ENCODE measurements at regions of chr1 and their contacts with region 1.

Region 1: DNA sequence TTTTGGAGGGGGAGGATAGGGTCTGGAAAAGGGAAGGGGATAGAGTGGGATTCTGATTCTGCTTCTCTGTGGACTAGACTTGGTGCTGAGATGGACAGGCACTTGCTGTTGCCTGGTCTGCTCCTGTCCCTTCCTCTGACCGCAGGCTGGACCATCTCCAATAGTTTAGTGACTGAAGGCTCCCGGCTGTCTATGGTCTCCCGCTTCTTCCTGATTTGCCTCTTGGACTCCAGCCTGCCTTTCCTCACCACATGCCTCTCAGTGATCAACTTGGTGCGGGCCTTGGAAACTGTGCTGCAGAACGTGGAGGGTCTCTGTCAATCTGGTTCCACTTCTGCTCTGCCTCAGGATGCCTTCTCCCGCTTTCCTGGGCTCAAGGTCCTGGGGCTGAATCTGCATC is 6.3 kb upstream of the ZSCAN20 start:
- DNase-seq: no peak
- ATAC-seq: peak in 3 of 4 donors; percentile 52 to 76 (median 63)
- H3K4me3 ChIP-seq: no peak overlapping the region
- H3K27ac ChIP-seq: no peak overlapping the region
- H3K4me1 ChIP-seq: peaks cover 21% of the 10 kb centered on the region
- H3K27me3 ChIP-seq: no peaks in the 10 kb centered on the region
- CTCF ChIP-seq: no peak

Region 2: DNA sequence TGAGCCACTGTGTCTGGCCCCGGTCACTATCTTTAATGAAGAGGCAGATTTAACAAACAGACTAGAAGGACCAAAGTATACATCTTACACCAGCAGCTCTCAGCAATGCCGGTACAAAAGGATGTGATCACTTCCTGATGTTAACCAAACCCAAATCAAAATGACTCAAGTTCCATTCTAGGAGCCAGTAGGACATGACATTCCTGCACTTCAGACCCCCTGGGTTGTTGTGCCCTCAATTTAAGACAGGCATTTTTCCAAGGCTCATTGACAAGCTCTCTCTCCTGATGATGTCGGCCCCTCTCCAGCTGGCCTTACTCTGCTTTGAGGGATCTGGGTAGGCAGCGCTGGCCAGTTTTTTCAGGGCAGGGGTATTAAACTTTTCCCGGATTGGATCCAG is 684.1 kb before region 1 on chr1:
- intact Hi-C with region 1: no loop called
- DNase-seq: no peak
- ATAC-seq: no peak
- H3K4me3 ChIP-seq: no peak overlapping the region
- H3K27ac ChIP-seq: no peak overlapping the region
- H3K4me1 ChIP-seq: no peaks in the 10 kb centered on the region
- H3K27me3 ChIP-seq: no peaks in the 10 kb centered on the region
- CTCF ChIP-seq: no peak

Region 3: GRCh38 chr1:33119532-33120217 is 346.5 kb before region 1 on chr1:
- intact Hi-C with region 1: loop called in 1 of 2 experiments (anchors 5 kb)
- DNase-seq: no peak
- ATAC-seq: peak in 1 of 4 donors; percentile 36
- H3K4me3 ChIP-seq: no peak overlapping the region
- H3K27ac ChIP-seq: no peak overlapping the region
- H3K4me1 ChIP-seq: no peaks in the 10 kb centered on the region
- H3K27me3 ChIP-seq: peaks cover 0 to 3% (median 0%) of the 10 kb centered on the region in 3 donors
- CTCF ChIP-seq: no peak

Measured in psoas muscle (tissue), 8 donors.